ENCODE measurements at regions of chr18 and their contacts with region 1.

Region 1: GRCh38 chr18:54269893-54270844 is 852 bp downstream of the POLI start:
- DNase-seq: no peak
- ATAC-seq: peak; percentile 57
- H3K4me3 Mint-ChIP-seq: peak overlapping the region; percentile 89
- H3K27ac Mint-ChIP-seq: peak overlapping the region; percentile 95
- H3K4me1 Mint-ChIP-seq: peaks cover 18% of the 10 kb centered on the region
- H3K27me3 Mint-ChIP-seq: no peaks in the 10 kb centered on the region

Region 2: DNA sequence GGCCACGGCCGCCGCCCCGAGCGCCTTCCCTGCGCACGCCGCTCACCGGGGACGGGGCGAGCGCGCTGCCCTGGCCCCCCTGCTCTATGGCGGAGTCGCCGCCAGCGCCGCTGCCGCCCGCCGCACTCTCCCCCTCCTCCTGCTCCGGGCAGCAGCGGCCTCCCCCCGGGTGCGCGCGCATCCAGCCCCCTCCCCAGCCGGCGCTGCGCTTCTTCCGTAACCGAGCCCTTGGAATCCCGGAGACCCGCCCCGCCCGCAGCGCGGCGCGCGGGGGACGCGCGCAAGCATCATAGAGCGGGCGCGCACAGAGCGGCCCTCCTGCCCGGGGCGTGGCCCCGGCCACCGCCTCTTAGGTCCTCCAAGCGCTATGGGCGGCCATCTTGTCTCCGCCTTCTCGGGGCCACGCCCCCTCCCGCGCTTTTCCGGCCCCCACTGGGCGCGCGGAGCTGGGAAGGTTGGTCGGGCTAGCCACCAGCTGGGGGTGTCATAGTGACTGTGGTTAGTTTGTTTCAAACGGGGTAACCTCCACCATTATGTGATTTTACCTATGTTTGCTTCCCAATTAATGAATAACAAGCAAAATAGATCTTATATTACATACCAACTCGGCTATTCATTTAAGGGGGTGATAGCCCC is 45.7 kb before region 1 on chr18 and contains the start of gene MBD2:
- POLR2A ChIA-PET with region 1: interaction called, 38 read pairs
- DNase-seq: peak; percentile 97
- ATAC-seq: peak; percentile 95
- H3K4me3 Mint-ChIP-seq: peak within 1 kb of the TSS; percentile 96
- H3K27ac Mint-ChIP-seq: peak within 1 kb of the TSS; percentile 98
- H3K4me1 Mint-ChIP-seq: peaks cover 33% of the 10 kb centered on the region
- H3K27me3 Mint-ChIP-seq: peaks cover 2% of the 10 kb centered on the region
- total RNA-seq, gene MBD2: 96.3 to 104 TPM

Region 3: GRCh38 chr18:54357660-54358494 is 87.7 kb after region 1 on chr18 and contains the starts of genes C18orf54 and STARD6:
- POLR2A ChIA-PET with region 1: interaction called, 36 read pairs
- DNase-seq: peak; percentile 93
- ATAC-seq: peak; percentile 96
- H3K4me3 Mint-ChIP-seq: peak within 1 kb of the TSS; percentile 99
- H3K27ac Mint-ChIP-seq: peak within 1 kb of the TSS; percentile 98
- H3K4me1 Mint-ChIP-seq: peaks cover 18% of the 10 kb centered on the region
- H3K27me3 Mint-ChIP-seq: peaks cover 7% of the 10 kb centered on the region
- total RNA-seq, gene C18orf54: 8.0 to 8.5 TPM
- total RNA-seq, gene STARD6: not detected

Measured in activated naive CD8-positive, alpha-beta T cell treated with anti-CD3 and anti-CD28 coated beads, Interleukin-2, amount 10 ng/mL, durations not matched to agents 7 days and 5 days (primary cell).